Thyroid gland (tissue), 4 donors: ENCODE measurements at regions of chr7 and their contacts with region 1.

Region 1: DNA sequence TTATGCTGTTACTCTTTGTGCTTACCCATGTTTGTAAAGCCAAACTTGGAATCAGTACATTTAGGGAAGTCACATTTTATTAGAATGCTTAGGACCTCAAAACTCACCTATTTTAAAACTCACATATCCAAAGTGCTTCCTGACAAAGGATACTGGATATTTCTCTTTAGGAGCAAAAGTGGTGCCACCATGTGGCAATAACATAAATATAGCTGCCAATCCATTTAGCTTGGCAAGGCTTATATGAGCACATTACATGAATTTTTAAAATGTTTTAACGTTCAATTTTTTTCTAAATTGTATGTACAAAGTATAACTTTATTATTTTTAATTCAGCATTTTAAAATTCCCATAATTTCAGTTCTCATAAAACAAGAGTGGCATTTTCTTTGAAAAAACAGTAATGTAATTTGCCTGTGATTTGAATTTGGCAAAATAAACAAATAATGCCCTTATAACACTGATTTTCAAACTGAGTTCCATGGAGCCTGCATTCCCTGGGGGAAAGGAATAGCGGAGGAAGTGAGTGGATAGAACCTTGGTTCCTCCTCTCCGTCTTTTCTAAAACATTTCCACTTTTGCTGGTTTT is 75.4 kb downstream of the HDAC9 start:
- DNase-seq: no peak
- H3K4me3 ChIP-seq: no peak overlapping the region
- H3K27ac ChIP-seq: no peak overlapping the region
- H3K4me1 ChIP-seq: no peaks in the 10 kb centered on the region
- H3K27me3 ChIP-seq: no peaks in the 10 kb centered on the region
- CTCF ChIP-seq: peak in 5 of 6 experiments; percentile 15 to 62 (median 56)
- POLR2A ChIP-seq: no peak

Region 2: DNA sequence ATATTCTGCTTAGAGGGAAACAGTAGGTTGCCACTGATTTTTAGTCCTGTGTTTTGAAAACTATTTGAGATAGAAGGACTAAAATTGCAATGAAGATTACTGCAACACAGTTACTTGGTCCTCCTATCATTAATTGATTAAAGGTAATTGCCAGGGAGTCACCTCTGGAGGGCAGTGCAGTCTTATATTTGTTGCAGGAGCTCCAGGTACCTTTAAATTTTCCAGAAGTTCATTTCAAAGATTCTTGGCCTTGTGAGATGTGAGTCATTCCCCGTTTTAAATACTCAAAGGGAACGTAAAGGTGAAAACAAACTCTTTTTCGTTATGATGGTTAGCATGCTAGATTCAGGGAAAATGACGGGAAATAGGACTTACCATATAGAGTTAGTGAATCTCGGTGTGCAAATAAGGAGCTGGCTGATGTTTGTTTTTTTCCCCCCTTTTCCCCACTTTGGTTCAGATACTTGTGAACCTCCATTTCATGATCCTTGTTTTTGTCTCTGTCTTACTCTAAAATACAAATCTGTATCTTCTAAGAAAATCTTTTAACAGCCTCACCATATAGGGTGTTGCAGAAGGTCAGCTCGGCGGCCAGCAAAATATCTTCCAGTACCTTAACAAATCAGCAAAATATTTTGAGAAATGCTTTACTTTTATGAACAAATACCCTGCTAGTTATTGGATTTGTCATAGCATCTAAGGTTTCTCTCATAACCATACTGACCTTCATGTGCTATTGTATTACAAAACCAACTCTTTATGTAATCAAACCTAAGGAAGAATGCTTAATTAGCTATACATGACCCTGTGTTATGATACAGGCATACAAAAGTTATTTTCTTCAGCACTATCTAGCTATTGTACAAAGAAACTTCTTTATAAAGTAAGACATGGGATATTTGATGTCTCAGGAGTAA is 218.4 kb before region 1 on chr7:
- intact Hi-C with region 1: loop called (anchors 5 kb)
- DNase-seq: peak; percentile 40 to 52
- H3K4me3 ChIP-seq: no peak overlapping the region
- H3K27ac ChIP-seq: no peak overlapping the region
- H3K4me1 ChIP-seq: no peaks in the 10 kb centered on the region
- H3K27me3 ChIP-seq: no peaks in the 10 kb centered on the region
- CTCF ChIP-seq: peak; percentile 32 to 77 (median 62)
- POLR2A ChIP-seq: no peak